K562 (cell line): ENCODE measurements at regions of chr17 and their contacts with region 1.

Region 1: DNA sequence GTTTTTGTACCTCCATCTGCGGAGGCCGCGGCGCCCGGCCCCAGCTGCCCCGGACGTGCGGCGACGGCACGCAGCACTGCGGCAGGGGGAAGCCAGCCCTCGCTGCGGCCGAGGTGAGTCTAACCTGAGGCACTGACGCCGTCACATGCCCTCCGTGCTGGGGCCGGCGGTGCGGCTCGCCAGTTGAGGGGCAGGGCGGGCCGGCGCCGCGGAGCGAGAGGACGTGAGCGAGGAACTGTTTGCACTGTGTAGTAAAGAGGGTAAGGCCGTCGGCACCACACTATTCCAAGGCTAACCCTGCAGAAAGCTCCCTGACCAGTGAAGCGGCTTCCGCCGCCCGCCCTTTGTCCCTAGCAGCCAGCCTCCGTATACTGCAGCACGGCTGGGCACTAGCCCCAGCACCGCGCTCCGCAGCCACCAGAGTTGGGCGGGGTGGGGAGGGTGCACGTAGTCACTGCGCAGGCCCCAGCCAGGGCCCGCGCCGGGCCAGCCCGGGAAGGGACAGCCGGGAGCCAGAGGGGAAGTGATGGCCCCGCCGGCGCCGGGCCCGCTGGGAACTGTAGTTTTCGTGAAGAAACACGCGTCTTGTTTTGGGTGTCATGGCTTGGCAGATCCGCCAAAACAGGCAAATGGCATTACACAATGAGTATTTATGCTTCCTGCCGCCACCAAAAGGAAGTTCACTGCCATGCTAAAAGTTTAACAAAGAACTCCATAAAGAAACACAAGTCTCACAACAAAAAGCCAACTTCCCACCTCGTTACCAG is 580 bp upstream of the KANSL1 start:
- DNase-seq: peak; percentile 96 to 99 (median 97)
- ATAC-seq: peak; percentile 94
- H3K4me3 ChIP-seq: peak overlapping the region; percentile 85
- H3K27ac ChIP-seq: peak overlapping the region; percentile 90
- H3K4me1 ChIP-seq: peaks cover 12 to 32% of the 10 kb centered on the region in 2 experiments
- H3K27me3 ChIP-seq: no peaks in the 10 kb centered on the region
- CTCF ChIP-seq: peak in 1 of 3 experiments; percentile 26; a peak in 3 of 6 replicates
- EP300 ChIP-seq: no peak
- POLR2A ChIP-seq: peak; percentile 92
- RAD21 ChIP-seq: no peak

Region 2: DNA sequence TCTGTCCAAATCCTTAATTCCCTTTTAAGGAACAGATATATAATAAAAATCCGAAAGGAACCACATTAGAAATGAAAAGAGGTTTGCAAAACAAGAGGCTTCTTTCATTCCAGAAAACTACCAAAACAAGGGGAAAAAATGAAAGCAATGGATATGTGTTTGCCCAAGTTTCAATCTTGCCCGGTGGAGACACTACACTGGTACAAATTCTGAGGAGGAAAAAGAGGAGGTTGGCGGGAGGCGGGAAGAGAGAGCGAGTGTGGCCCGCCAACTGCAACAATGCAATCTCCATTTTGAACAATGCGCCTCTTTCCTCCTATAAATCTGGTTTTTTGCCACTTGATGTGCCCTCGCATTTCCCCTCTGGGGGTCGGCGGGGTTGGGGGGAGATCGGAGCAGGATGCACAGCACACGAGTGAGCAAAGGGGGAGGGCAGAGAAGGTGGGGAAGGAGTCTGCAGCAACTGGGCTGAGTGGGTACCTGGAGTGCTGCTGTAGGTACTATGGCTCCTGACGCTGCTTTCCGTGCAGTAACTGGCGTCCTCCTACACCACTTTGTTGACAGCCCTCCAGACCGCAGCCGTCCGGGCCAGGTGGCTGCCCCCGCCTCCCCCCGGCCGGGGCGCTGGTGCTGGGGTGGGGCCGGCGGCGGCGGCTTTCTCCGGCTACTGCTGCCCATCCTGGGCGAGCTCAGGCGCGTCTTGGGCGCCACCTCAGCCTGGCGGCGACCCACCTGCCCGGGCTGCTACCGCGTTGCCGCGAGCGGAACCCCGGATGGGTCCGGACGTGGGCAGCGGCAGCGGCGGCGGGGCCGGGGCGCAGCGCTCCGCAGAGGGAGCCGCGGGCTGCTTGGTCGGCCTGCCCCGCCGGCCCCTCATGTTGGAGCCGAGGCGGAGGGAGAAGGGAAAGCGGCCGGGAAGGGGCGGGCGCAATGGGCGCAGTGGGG is 609.4 kb before region 1 on chr17:
- CTCF ChIA-PET with region 1: no interaction called
- POLR2A ChIA-PET with region 1: no interaction called
- in situ Hi-C with region 1: loop called (anchors 5 kb)
- intact Hi-C with region 1: no loop called
- DNase-seq: peak; percentile 64 to 73 (median 70)
- ATAC-seq: peak; percentile 86
- H3K4me3 ChIP-seq: peak overlapping the region; percentile 53
- H3K27ac ChIP-seq: peak overlapping the region; percentile 53
- H3K4me1 ChIP-seq: peaks cover 9 to 24% of the 10 kb centered on the region in 2 experiments; a peak in 4 of 5 replicates
- H3K27me3 ChIP-seq: peaks cover 2 to 30% of the 10 kb centered on the region in 2 experiments; a peak in 4 of 5 replicates
- CTCF ChIP-seq: no peak
- EP300 ChIP-seq: no peak
- POLR2A ChIP-seq: peak; percentile 55; the same call in 1 of the 2 replicates
- RAD21 ChIP-seq: no peak

Region 3: GRCh38 chr17:45775576-45776011 is 418.2 kb before region 1 on chr17:
- CTCF ChIA-PET with region 1: no interaction called
- POLR2A ChIA-PET with region 1: no interaction called
- in situ Hi-C with region 1: no loop called
- intact Hi-C with region 1: no loop called
- DNase-seq: no peak
- ATAC-seq: no peak
- H3K4me3 ChIP-seq: no peak overlapping the region
- H3K27ac ChIP-seq: no peak overlapping the region
- H3K4me1 ChIP-seq: no peaks in the 10 kb centered on the region
- H3K27me3 ChIP-seq: peaks cover 6 to 59% of the 10 kb centered on the region in 2 experiments; a peak in 3 of 5 replicates
- CTCF ChIP-seq: no peak
- EP300 ChIP-seq: no peak
- POLR2A ChIP-seq: no peak
- RAD21 ChIP-seq: no peak

Region 4: GRCh38 chr17:46044286-46044928 is 149.4 kb before region 1 on chr17:
- CTCF ChIA-PET with region 1: interaction called, 26 read pairs
- POLR2A ChIA-PET with region 1: interaction called, 4 read pairs
- in situ Hi-C with region 1: no loop called
- intact Hi-C with region 1: no loop called
- DNase-seq: peak; percentile 52 to 83 (median 60)
- ATAC-seq: peak; percentile 93
- H3K4me3 ChIP-seq: no peak overlapping the region
- H3K27ac ChIP-seq: no peak overlapping the region
- H3K4me1 ChIP-seq: peaks cover 0 to 5% of the 10 kb centered on the region in 2 experiments; a peak in 2 of 5 replicates
- H3K27me3 ChIP-seq: no peaks in the 10 kb centered on the region
- CTCF ChIP-seq: peak; percentile 92 to 98 (median 98)
- EP300 ChIP-seq: no peak
- POLR2A ChIP-seq: no peak
- RAD21 ChIP-seq: peak; percentile 78

Region 5: DNA sequence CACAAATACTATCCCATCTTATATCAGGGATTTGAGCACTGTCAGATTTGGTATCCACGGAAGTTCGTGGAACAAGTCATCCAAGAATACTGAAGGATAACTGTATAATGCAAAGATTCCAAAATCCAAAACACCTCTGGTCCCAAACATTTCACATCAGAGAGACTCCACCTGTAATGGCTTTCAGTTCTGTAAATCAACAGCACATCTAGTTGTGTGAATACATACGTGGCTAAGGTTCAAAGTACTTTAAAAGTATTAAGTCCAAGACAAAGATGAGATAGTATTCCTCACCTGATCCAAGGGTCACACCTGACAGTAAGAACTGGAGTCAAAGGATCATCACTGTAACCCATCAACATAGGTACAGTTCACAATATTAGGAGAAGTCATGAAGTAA is 55.3 kb before region 1 on chr17:
- CTCF ChIA-PET with region 1: no interaction called
- POLR2A ChIA-PET with region 1: no interaction called
- in situ Hi-C with region 1: no loop called
- intact Hi-C with region 1: no loop called
- DNase-seq: no peak
- ATAC-seq: no peak
- H3K4me3 ChIP-seq: no peak overlapping the region
- H3K27ac ChIP-seq: no peak overlapping the region
- H3K4me1 ChIP-seq: no peaks in the 10 kb centered on the region; a peak in 1 of 5 replicates
- H3K27me3 ChIP-seq: no peaks in the 10 kb centered on the region
- CTCF ChIP-seq: no peak
- EP300 ChIP-seq: no peak
- POLR2A ChIP-seq: no peak
- RAD21 ChIP-seq: no peak

Region 6: GRCh38 chr17:46179375-46179999 is 14.3 kb before region 1 on chr17:
- CTCF ChIA-PET with region 1: no interaction called
- POLR2A ChIA-PET with region 1: interaction called, 49 read pairs
- in situ Hi-C with region 1: no loop called
- intact Hi-C with region 1: no loop called
- DNase-seq: no peak
- ATAC-seq: no peak
- H3K4me3 ChIP-seq: no peak overlapping the region
- H3K27ac ChIP-seq: no peak overlapping the region
- H3K4me1 ChIP-seq: peaks cover 19 to 51% of the 10 kb centered on the region in 2 experiments; a peak in 4 of 5 replicates
- H3K27me3 ChIP-seq: no peaks in the 10 kb centered on the region
- CTCF ChIP-seq: no peak
- EP300 ChIP-seq: no peak
- POLR2A ChIP-seq: no peak
- RAD21 ChIP-seq: no peak

Region 7: GRCh38 chr17:46266656-46267544 is 73.1 kb after region 1 on chr17:
- CTCF ChIA-PET with region 1: interaction called, 5 read pairs
- POLR2A ChIA-PET with region 1: interaction called, 3 read pairs
- in situ Hi-C with region 1: no loop called
- intact Hi-C with region 1: loop called (anchors 5 kb)
- DNase-seq: peak; percentile 95 to 99 (median 98)
- ATAC-seq: peak; percentile 91
- H3K4me3 ChIP-seq: peak overlapping the region; percentile 65
- H3K27ac ChIP-seq: peak overlapping the region; percentile 74
- H3K4me1 ChIP-seq: peaks cover 19 to 29% of the 10 kb centered on the region in 2 experiments; a peak in 4 of 5 replicates
- H3K27me3 ChIP-seq: no peaks in the 10 kb centered on the region
- CTCF ChIP-seq: no peak
- EP300 ChIP-seq: no peak
- POLR2A ChIP-seq: peak; percentile 95
- RAD21 ChIP-seq: no peak

Region 8: DNA sequence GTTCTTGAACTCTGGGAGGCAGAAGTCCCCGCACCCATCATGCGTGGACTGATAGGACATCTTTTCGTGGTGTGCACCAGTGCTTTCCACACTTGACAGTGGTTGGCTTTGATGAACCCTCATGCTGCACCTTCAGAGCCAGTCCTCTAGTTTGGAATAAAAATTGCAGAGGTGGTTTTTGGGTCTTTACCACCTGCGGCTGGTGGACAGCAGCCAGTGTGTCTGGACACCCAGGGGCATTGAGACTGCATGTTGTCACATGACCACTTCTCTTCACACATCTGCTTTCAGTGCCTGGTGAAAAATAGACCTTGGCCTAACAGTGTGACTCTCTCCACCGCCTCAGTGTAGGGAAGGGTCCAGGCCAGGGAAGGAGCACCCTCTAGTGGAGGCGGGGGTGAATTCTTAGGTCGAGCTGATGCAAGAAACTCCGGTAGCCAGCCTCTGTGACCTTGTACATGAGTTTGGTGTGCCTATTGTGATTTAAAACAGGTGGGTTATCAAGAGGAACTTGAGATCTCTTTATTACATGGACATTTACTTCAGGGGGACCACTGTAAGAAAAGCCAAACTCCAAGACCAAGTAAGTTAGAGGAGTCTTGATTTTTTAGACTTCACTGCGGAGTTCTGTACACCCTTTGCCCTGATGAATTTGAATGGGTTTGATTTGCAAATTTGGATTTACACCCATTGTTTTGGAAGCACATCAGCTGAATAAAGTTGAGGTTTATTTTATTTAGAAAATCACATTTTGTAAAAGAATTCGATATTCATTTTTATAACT is 747.0 kb after region 1 on chr17:
- CTCF ChIA-PET with region 1: no interaction called
- POLR2A ChIA-PET with region 1: no interaction called
- in situ Hi-C with region 1: no loop called
- intact Hi-C with region 1: no loop called
- DNase-seq: peak; percentile 82 to 90 (median 83)
- ATAC-seq: peak; percentile 87
- H3K4me3 ChIP-seq: no peak overlapping the region
- H3K27ac ChIP-seq: no peak overlapping the region
- H3K4me1 ChIP-seq: peaks cover 19% of the 10 kb centered on the region in 2 experiments
- H3K27me3 ChIP-seq: no peaks in the 10 kb centered on the region
- CTCF ChIP-seq: peak; percentile 89 to 95 (median 95)
- EP300 ChIP-seq: no peak
- POLR2A ChIP-seq: peak; percentile 48; the same call in 1 of the 2 replicates
- RAD21 ChIP-seq: peak; percentile 82 to 95